Activated CD4-positive, alpha-beta T cell treated with anti-CD3 and anti-CD28 coated beads, Interleukin-2, amount 10 ng/mL, durations not matched to agents 24 days and 14 days (primary cell): ENCODE measurements at regions of chr12 and their contacts with region 1.

Region 1: DNA sequence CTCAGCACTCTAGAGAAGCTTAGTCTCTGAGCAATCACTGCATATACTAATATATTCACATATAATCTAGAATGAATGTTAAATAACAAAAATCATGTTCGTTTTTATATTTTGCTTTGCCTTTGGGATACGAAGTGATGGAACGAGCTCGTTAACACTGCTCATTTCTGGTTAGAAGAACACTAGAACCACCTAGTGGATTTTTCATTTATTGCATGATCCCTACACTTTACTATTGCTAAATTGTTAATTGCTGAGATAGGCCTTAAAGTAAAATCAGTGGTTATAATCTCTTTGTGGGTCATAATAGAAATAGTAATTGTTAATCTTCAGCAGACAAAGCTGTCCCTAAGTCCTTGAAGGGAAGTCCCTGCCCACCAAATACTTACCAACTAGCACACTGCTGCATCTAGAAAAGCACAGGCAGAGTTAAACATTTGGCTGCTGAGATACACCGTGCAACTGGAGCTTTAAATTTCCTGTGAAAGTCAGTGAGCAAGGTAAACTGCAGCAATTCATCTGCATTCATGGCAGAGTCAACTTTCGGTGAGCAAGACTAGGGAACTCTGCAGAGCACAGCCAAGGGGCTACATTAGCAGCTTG is 353.7 kb downstream of the APAF1 start:
- DNase-seq: no peak
- H3K4me3 Mint-ChIP-seq: no peak overlapping the region
- H3K27ac Mint-ChIP-seq: no peak overlapping the region
- H3K4me1 Mint-ChIP-seq: no peaks in the 10 kb centered on the region
- H3K27me3 Mint-ChIP-seq: peaks cover 4% of the 10 kb centered on the region

Region 2: DNA sequence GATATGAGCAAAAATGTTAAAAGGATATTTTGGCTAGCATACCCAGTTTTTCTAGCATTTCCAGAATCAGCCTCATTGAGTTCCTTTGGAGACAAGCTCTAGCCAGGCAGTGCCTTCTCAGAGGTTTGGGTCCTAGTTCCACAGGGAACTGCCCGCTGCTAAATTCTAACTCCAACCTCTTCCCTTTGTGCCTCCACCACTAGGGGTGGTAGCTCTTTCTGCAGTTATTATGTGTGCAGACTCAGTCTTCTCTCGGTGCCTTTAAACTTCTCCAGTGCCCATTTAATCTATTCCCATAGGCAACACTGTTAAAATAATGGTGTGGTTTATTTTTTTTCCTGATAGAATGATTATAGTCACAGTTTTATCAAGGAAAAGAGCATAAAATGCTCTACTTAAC is 426.8 kb before region 1 on chr12:
- intact Hi-C with region 1: loop called (anchors 1 kb)
- DNase-seq: no peak
- H3K4me3 Mint-ChIP-seq: no peak overlapping the region
- H3K27ac Mint-ChIP-seq: no peak overlapping the region
- H3K4me1 Mint-ChIP-seq: no peaks in the 10 kb centered on the region
- H3K27me3 Mint-ChIP-seq: peaks cover 2% of the 10 kb centered on the region

Region 3: GRCh38 chr12:98698603-98699463 is 300.0 kb before region 1 on chr12:
- intact Hi-C with region 1: loop called (anchors 1 kb)
- DNase-seq: peak; percentile 83
- H3K4me3 Mint-ChIP-seq: no peak overlapping the region
- H3K27ac Mint-ChIP-seq: peak overlapping the region; percentile 25
- H3K4me1 Mint-ChIP-seq: peaks cover 10% of the 10 kb centered on the region
- H3K27me3 Mint-ChIP-seq: no peaks in the 10 kb centered on the region

Region 4: GRCh38 chr12:98725476-98726247 is 273.1 kb before region 1 on chr12:
- intact Hi-C with region 1: loop called (anchors 5 kb)
- DNase-seq: peak; percentile 84
- H3K4me3 Mint-ChIP-seq: no peak overlapping the region
- H3K27ac Mint-ChIP-seq: peak overlapping the region; percentile 39
- H3K4me1 Mint-ChIP-seq: peaks cover 14% of the 10 kb centered on the region
- H3K27me3 Mint-ChIP-seq: no peaks in the 10 kb centered on the region

Region 5: GRCh38 chr12:99039367-99040120 is 40.7 kb after region 1 on chr12:
- intact Hi-C with region 1: no loop called
- DNase-seq: no peak
- H3K4me3 Mint-ChIP-seq: no peak overlapping the region
- H3K27ac Mint-ChIP-seq: no peak overlapping the region
- H3K4me1 Mint-ChIP-seq: no peaks in the 10 kb centered on the region
- H3K27me3 Mint-ChIP-seq: no peaks in the 10 kb centered on the region